Activated CD8-positive, alpha-beta T cell treated with anti-CD3 and anti-CD28 coated beads for 36 hours (primary cell): ENCODE measurements at regions of chr7 and their contacts with region 1.

Region 1: GRCh38 chr7:35424869-35425495 is 171.1 kb upstream of the TBX20 start:
- DNase-seq: peak; percentile 71
- ATAC-seq: peak; percentile 87
- H3K4me3 Mint-ChIP-seq: no peak overlapping the region
- H3K27ac Mint-ChIP-seq: no peak overlapping the region
- H3K4me1 Mint-ChIP-seq: no peaks in the 10 kb centered on the region
- H3K27me3 Mint-ChIP-seq: peaks cover 20% of the 10 kb centered on the region
- CTCF ChIP-seq: peak; percentile 81

Region 2: DNA sequence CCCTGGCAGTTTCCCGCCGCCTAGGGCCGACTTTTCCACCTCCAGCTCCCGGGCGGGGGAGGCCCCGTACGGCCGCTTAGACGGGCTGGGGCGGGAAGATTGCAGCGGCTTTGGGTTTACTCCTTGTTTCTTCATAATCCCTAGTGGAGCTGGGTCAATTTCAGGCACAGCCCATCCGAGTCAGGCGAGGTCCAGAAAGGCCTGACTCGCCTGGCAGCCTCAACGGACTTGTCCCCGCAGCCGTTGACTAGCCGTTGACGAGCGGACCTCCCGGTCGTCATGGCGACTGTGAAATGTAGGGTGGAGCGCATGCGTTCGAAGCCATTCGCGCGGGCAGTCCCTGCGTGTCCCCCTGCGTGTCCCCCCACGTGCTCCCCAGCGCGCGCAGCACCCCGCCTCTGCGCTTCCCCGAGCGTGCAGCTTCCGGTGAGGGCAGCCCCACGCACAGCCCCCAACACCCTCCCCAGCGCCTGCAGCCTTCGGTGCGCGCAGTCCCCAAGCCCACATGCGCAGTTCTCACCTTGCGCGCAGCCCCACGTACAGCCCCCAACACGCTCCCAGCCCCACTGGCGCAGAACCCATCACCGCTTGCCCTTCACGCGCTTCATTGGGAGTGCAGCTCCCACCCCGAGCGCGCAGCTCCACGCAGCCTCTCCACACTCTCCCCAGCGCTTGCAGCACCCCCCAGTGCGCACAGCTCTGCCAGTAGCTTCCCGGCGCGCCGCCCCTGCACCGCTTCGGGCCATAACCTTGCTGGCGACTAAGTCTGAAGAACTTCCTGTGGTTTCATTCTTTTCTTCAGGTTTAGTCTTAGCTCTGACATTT is 238.9 kb before region 1 on chr7:
- CTCF ChIA-PET with region 1: no interaction called
- POLR2A ChIA-PET with region 1: no interaction called
- intact Hi-C with region 1: loop called (anchors 10 kb)
- DNase-seq: peak; percentile 30
- ATAC-seq: peak; percentile 58
- H3K4me3 Mint-ChIP-seq: peak overlapping the region; percentile 60
- H3K27ac Mint-ChIP-seq: no peak overlapping the region
- H3K4me1 Mint-ChIP-seq: peaks cover 7% of the 10 kb centered on the region
- H3K27me3 Mint-ChIP-seq: peaks cover 29% of the 10 kb centered on the region
- CTCF ChIP-seq: no peak

Region 3: DNA sequence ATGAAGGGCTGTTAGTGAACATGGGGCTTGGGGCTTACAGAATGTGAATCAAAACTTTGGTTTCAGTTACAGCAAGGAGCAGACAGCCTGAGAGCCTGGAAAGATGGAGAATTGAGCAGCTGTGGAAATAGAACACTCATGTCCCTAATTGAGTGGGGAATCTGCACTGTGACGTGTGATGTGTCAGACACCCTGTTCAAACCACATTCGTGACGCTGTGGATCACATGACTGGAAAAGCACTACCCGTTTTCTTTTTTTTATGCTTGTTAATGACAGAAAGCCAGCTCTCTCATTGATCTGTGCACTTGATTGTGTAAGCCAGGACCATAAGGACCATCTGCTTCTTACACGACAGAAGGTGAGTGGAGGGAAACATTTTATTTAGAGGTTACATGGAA is 156.0 kb before region 1 on chr7:
- CTCF ChIA-PET with region 1: no interaction called
- POLR2A ChIA-PET with region 1: no interaction called
- intact Hi-C with region 1: no loop called
- DNase-seq: no peak
- ATAC-seq: no peak
- H3K4me3 Mint-ChIP-seq: no peak overlapping the region
- H3K27ac Mint-ChIP-seq: no peak overlapping the region
- H3K4me1 Mint-ChIP-seq: no peaks in the 10 kb centered on the region
- H3K27me3 Mint-ChIP-seq: peaks cover 36% of the 10 kb centered on the region
- CTCF ChIP-seq: no peak

Region 4: GRCh38 chr7:35399216-35399615 is 25.8 kb before region 1 on chr7:
- CTCF ChIA-PET with region 1: no interaction called
- POLR2A ChIA-PET with region 1: no interaction called
- intact Hi-C with region 1: no loop called
- DNase-seq: no peak
- ATAC-seq: no peak
- H3K4me3 Mint-ChIP-seq: no peak overlapping the region
- H3K27ac Mint-ChIP-seq: no peak overlapping the region
- H3K4me1 Mint-ChIP-seq: no peaks in the 10 kb centered on the region
- H3K27me3 Mint-ChIP-seq: peaks cover 5% of the 10 kb centered on the region
- CTCF ChIP-seq: no peak

Region 5: GRCh38 chr7:35450456-35451214 is 25.7 kb after region 1 on chr7:
- CTCF ChIA-PET with region 1: no interaction called
- POLR2A ChIA-PET with region 1: no interaction called
- intact Hi-C with region 1: no loop called
- DNase-seq: no peak
- ATAC-seq: no peak
- H3K4me3 Mint-ChIP-seq: no peak overlapping the region
- H3K27ac Mint-ChIP-seq: no peak overlapping the region
- H3K4me1 Mint-ChIP-seq: peaks cover 3% of the 10 kb centered on the region
- H3K27me3 Mint-ChIP-seq: peaks cover 33% of the 10 kb centered on the region
- CTCF ChIP-seq: no peak

Region 6: GRCh38 chr7:35519971-35520809 is 95.2 kb after region 1 on chr7:
- CTCF ChIA-PET with region 1: interaction called, 64 read pairs
- POLR2A ChIA-PET with region 1: no interaction called
- intact Hi-C with region 1: loop called (anchors 2 kb)
- DNase-seq: peak; percentile 66
- ATAC-seq: peak; percentile 92
- H3K4me3 Mint-ChIP-seq: no peak overlapping the region
- H3K27ac Mint-ChIP-seq: no peak overlapping the region
- H3K4me1 Mint-ChIP-seq: no peaks in the 10 kb centered on the region
- H3K27me3 Mint-ChIP-seq: no peaks in the 10 kb centered on the region
- CTCF ChIP-seq: peak; percentile 88

Region 7: GRCh38 chr7:35537067-35538023 is 112.4 kb after region 1 on chr7:
- CTCF ChIA-PET with region 1: interaction called, 4 read pairs
- POLR2A ChIA-PET with region 1: no interaction called
- intact Hi-C with region 1: loop called (anchors 5 kb)
- DNase-seq: peak; percentile 84
- ATAC-seq: peak; percentile 99
- H3K4me3 Mint-ChIP-seq: peak overlapping the region; percentile 70
- H3K27ac Mint-ChIP-seq: no peak overlapping the region
- H3K4me1 Mint-ChIP-seq: no peaks in the 10 kb centered on the region
- H3K27me3 Mint-ChIP-seq: peaks cover 2% of the 10 kb centered on the region
- CTCF ChIP-seq: peak; percentile 94